ENCODE measurements at regions of chr13 and their contacts with region 1.

Region 1: DNA sequence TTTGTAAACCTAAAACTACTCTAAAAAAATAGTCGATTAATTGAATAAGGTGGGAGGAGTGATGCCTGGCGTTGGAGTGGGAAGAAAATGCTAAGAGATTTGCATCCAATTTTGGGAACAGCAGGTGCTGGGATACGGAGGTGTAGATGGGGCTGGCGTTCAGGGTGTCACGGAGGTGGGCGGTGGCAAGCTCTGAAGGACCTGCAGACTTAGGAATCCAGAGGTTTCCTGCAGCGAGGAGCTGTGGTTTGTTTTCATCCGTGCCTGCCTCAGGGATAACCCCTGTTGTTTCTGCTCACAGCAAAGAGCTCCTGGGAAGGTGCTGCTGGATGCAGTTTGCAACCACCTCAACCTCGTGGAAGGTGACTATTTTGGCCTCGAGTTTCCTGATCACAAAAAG is 166.4 kb upstream of the RNF113B start:
- DNase-seq: no peak
- H3K4me3 ChIP-seq: no peak overlapping the region
- H3K27ac ChIP-seq: no peak overlapping the region
- H3K27me3 ChIP-seq: peaks cover 0 to 26% (median 0%) of the 10 kb centered on the region in 45 donors
- CTCF ChIP-seq: no peak

Region 2: DNA sequence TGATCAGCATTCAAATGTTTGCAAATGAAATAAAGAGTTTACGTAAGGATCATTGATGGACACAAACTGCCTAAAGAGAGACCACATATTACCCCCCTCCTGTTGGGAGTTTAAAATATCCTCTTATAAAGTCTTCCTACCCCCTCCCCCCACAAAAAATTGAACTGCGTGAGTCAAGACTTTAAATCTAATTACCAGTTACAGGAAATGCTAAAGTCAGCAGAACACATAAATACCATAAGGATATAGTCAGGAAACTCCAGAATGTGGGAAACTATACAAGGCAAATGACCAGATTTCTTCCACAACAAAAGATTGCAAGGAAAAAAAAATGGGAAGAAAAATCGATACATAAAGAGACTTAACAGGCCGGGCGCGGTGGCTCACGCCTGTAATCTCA is 244.9 kb before region 1 on chr13:
- intact Hi-C with region 1: no loop called
- DNase-seq: no peak
- H3K4me3 ChIP-seq: no peak overlapping the region
- H3K27ac ChIP-seq: no peak overlapping the region
- H3K27me3 ChIP-seq: peaks cover 0 to 14% (median 0%) of the 10 kb centered on the region in 45 donors
- CTCF ChIP-seq: no peak

Region 3: DNA sequence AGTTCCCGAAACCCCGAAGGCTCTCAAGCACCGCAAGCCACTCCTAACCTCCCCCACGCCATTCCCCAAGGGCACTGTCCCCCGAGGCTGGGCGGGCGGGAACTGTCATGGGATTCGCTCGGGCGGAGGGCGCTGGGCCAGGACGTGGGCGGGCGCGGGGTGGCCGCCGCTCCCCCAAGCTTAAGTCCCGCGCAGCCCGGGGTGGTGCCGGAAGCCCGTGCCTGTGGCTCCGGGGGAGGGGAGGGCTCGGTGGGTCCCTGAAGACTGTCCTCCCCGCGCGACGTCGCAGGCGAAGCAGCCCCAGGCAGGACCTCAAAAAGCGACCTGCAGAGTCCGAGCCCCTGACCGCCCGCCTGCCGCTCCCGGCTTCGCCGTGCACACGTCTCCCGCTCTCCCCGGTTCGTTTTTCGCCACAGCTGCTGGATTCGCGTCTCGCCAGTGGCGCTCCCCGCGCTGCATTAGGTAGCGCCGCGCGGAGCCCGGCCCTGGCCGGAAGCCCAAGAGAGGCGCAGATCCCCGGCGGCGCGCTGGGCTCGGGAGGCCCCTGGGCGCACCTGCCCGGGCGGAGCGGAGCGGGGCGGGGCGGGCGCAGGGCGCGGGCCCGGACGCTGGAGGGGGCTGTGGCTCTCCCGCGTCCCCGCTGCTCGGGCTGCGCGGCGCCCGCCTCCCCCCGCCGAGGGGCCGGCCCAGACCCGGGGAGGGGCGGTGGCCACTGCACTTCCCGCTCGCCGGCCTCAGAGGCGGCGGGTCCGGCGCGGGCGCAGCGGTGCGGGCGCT is 200.9 kb before region 1 on chr13 and contains the start of gene FARP1:
- intact Hi-C with region 1: loop called in 1 of 2 experiments (anchors 5 kb)
- DNase-seq: peak in 9 of 10 donors; percentile 17 to 79 (median 48)
- H3K4me3 ChIP-seq: peak within 1 kb of the TSS; percentile 30 to 81 (median 67)
- H3K27ac ChIP-seq: peak within 1 kb of the TSS in 53 of 59 donors; percentile 3 to 88 (median 76)
- H3K27me3 ChIP-seq: peaks cover 0 to 48% (median 0%) of the 10 kb centered on the region in 45 donors
- CTCF ChIP-seq: peak in 26 of 56 donors; percentile 12 to 56 (median 28)
- total RNA-seq, gene FARP1: 68.6 to 202 (median 123) TPM

Region 4: DNA sequence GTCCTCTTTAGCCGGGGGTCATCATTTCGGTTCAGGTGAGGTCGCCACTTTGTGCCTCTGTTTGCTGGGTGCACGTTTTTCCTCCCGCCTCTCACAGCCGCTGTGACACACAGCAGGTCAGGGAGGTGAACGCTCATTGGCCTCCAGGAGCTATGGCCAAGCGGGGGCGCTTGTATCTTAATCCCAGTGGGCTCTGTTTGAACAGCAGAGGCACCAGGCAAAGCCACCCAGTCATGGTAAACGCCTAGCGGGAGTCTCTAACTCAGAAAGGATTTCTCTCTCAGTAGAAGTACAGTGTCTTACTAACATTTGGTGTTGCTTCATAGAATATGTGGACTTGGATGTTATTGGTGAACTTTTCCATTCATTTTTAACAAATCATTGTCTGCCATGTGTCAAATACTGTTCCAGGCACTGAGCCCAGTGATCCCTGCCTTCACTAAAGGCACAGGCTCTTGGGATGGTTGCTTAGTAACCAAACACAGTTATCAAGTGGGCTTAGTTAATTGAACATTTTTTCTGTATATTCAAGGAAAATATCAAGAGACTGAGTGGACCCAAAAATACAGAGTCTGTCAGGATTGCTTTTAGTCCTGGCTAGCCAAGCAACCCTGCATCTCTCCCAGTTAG is 46.7 kb after region 1 on chr13:
- intact Hi-C with region 1: loop called in 1 of 2 experiments (anchors 5 kb)
- DNase-seq: no peak
- H3K4me3 ChIP-seq: no peak overlapping the region
- H3K27ac ChIP-seq: peak overlapping the region in 6 of 59 donors; percentile 2 to 27 (median 20)
- H3K27me3 ChIP-seq: peaks cover 0 to 16% (median 0%) of the 10 kb centered on the region in 45 donors
- CTCF ChIP-seq: no peak

Region 5: DNA sequence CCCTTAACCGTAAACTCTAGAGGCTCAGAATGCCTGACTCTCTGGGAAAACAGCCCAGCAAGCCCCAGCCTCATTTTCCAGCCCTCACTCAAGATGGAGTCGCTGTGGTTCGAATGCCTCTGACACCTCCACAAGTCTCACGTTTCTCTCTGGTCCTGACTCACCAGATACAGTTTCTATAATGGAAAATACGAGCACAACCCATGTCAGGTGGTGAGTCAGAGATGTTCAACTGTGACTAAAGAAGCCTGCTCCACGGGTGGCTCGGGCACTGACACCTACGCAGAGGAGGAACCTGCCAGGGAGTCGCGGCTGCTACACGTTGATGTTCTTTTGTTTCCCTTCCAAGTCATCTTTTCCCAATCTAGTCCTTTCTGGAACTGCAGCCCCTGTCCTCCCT is 320.6 kb after region 1 on chr13:
- intact Hi-C with region 1: no loop called
- DNase-seq: peak in 5 of 10 donors; percentile 24 to 67 (median 40)
- H3K4me3 ChIP-seq: no peak overlapping the region
- H3K27ac ChIP-seq: no peak overlapping the region
- H3K27me3 ChIP-seq: no peaks in the 10 kb centered on the region
- CTCF ChIP-seq: no peak